CD8-positive, alpha-beta T cell (primary cell): ENCODE measurements at regions of chr11 and their contacts with region 1.

Region 1: DNA sequence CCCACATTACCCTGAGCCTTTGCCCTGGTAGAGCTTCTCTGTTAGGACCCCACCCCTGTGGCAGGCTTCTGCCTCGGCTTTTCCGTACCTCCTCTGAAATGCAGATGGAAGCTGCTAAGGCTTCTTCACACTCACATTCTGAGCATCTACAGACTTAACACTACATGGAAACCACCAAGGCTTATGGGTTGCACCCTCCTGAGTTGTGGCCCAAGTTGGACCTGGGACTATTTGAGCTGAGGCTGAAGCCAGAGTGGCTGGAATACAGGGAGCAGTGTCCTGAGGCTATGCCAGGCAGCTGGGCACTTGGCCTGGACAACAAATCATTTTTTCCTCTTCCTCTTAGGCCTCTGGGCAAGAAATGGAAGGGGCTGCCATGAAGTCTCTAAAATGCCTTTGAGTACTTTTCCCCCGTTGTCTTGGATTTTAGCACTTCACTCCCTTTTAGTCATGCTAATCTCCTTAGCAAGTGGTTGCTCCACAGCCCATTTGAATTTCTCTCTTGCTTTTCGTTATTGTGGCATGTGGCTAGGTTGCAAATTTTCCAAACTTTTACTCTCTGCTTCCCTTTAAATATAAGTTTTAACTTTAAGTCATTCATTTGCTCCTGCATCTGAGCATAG is 114.8 kb upstream of the FIBIN start:
- DNase-seq: no peak
- ATAC-seq: no peak
- H3K4me3 ChIP-seq: no peak overlapping the region
- H3K4me3 Mint-ChIP-seq: no peak overlapping the region
- H3K27ac ChIP-seq: no peak overlapping the region
- H3K27ac Mint-ChIP-seq: no peak overlapping the region
- H3K4me1 ChIP-seq: no peaks in the 10 kb centered on the region
- H3K4me1 Mint-ChIP-seq: no peaks in the 10 kb centered on the region
- H3K27me3 ChIP-seq: no peaks in the 10 kb centered on the region
- H3K27me3 Mint-ChIP-seq: no peaks in the 10 kb centered on the region
- CTCF ChIP-seq: no peak

Region 2: DNA sequence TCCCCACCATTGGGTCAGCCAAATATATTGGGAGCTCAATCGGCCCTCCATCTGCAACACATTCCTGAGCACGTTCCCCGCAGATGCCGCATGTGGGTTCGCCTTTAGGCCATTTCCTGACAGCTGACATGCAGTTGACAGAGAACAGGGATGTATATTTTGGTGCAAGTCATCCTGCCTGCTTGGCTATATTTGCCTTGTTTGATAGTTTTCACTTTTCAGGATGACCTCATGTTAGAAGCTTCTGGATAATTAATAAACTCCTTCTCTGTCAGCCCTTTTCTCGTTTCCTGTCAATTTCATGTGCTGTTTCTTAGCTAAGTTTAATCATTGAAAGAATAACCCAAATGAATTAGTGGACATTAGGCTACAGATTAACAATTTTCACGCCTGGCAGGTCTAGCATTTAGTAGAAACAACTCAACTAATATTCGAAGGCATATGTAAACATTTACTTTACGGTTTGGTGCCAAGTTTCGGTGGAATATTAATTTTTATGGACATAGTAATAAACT is 51.4 kb before region 1 on chr11:
- CTCF ChIA-PET with region 1: no interaction called
- POLR2A ChIA-PET with region 1: no interaction called
- intact Hi-C with region 1: no loop called
- DNase-seq: no peak
- ATAC-seq: no peak
- H3K4me3 ChIP-seq: no peak overlapping the region
- H3K4me3 Mint-ChIP-seq: no peak overlapping the region
- H3K27ac ChIP-seq: no peak overlapping the region
- H3K27ac Mint-ChIP-seq: no peak overlapping the region
- H3K4me1 ChIP-seq: no peaks in the 10 kb centered on the region
- H3K4me1 Mint-ChIP-seq: no peaks in the 10 kb centered on the region
- H3K27me3 ChIP-seq: no peaks in the 10 kb centered on the region
- H3K27me3 Mint-ChIP-seq: no peaks in the 10 kb centered on the region
- CTCF ChIP-seq: no peak

Region 3: GRCh38 chr11:26867286-26867685 is 11.8 kb before region 1 on chr11:
- CTCF ChIA-PET with region 1: no interaction called
- POLR2A ChIA-PET with region 1: no interaction called
- intact Hi-C with region 1: loop called in 1 of 2 experiments (anchors 1 kb)
- DNase-seq: no peak
- ATAC-seq: no peak
- H3K4me3 ChIP-seq: no peak overlapping the region
- H3K4me3 Mint-ChIP-seq: no peak overlapping the region
- H3K27ac ChIP-seq: no peak overlapping the region
- H3K27ac Mint-ChIP-seq: no peak overlapping the region
- H3K4me1 ChIP-seq: no peaks in the 10 kb centered on the region
- H3K4me1 Mint-ChIP-seq: no peaks in the 10 kb centered on the region
- H3K27me3 ChIP-seq: no peaks in the 10 kb centered on the region
- H3K27me3 Mint-ChIP-seq: no peaks in the 10 kb centered on the region
- CTCF ChIP-seq: no peak

Region 4: DNA sequence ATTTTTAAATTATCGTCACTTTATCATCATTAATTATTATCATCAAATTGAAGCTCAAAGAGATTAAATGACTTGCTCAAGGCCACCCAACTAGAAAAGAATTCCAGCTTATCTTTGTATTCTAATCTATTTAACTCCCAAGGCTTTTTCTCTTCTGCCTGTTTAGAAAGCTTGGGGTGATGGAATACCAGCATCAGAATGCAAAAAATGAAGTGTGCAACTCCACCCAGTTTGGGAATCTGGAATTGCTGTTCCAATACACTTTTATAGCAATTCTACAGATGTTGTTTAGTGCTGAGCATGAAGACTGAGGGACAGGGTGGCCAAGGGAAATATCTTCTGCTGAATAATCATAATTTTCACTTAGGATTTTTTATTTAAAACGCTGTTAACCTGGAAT is 17.6 kb after region 1 on chr11:
- CTCF ChIA-PET with region 1: no interaction called
- POLR2A ChIA-PET with region 1: no interaction called
- intact Hi-C with region 1: no loop called
- DNase-seq: no peak
- ATAC-seq: no peak
- H3K4me3 ChIP-seq: no peak overlapping the region
- H3K4me3 Mint-ChIP-seq: no peak overlapping the region
- H3K27ac ChIP-seq: no peak overlapping the region
- H3K27ac Mint-ChIP-seq: no peak overlapping the region
- H3K4me1 ChIP-seq: no peaks in the 10 kb centered on the region
- H3K4me1 Mint-ChIP-seq: no peaks in the 10 kb centered on the region
- H3K27me3 ChIP-seq: no peaks in the 10 kb centered on the region
- H3K27me3 Mint-ChIP-seq: no peaks in the 10 kb centered on the region
- CTCF ChIP-seq: no peak

Region 5: DNA sequence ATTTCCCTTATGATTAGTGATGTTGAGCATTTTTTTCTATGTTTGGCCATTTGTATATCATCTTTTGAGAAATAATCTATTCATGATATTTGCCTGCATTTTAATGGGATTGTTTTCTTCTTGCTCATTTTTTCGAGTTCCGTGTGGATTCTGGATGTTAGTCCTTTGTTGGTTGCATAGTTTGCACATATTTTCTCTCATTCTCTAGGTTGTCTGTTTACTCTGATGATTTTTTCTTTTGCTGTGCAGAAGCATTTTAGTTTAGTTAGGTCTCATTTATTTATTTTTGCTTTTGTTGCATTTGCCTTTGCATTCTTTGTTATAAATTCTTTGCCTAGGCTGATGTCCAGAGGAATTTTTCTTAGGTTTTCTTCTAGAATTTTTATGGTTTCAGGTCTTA is 1316.4 kb after region 1 on chr11:
- CTCF ChIA-PET with region 1: no interaction called
- POLR2A ChIA-PET with region 1: no interaction called
- intact Hi-C with region 1: loop called in 1 of 2 experiments (anchors 10 kb)
- DNase-seq: no peak
- ATAC-seq: no peak
- H3K4me3 ChIP-seq: no peak overlapping the region
- H3K4me3 Mint-ChIP-seq: no peak overlapping the region
- H3K27ac ChIP-seq: no peak overlapping the region
- H3K27ac Mint-ChIP-seq: no peak overlapping the region
- H3K4me1 ChIP-seq: no peaks in the 10 kb centered on the region
- H3K4me1 Mint-ChIP-seq: no peaks in the 10 kb centered on the region
- H3K27me3 ChIP-seq: no peaks in the 10 kb centered on the region
- H3K27me3 Mint-ChIP-seq: no peaks in the 10 kb centered on the region
- CTCF ChIP-seq: no peak